H1 (cell line): ENCODE measurements at regions of chr18 and their contacts with region 1.

Region 1: DNA sequence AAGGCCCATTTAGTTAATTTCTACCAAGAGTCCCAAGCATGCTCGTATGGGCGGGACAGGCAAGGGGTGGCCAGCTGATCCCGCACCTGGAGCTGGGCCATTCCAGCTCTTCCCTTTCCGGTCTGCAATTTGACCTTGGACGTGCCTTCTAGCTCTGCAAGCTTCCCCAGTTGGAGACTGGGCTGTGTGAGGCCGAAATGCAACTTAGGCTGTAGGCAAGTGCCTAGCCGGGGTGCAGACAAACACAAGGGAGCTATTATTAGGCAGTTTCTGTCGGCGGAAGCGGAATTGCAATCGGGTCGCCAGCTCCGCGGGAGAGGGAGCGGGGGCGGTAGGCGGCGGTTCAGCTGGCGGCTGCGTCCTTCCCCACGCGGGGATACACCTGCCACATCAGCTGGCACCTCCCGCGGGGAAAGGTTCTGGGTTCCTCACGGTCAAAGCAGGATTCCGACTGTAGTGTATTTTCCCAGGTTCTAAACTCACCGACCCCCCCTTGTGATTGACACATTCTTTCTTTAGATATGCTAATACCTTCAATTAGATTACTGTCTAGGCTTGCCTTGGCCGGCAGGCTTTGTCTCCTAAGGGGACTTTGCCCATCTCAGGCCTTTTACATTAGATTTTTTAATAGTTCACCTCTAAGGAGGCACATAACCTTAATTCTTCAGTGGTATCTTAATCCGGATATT is 17.1 kb upstream of the ZNF532 start:
- DNase-seq: peak; percentile 88 to 94
- H3K4me3 ChIP-seq: peak overlapping the region in 1 of 4 experiments; percentile 28; a peak in 4 of 8 replicates
- H3K27ac ChIP-seq: peak overlapping the region; percentile 75
- H3K4me1 ChIP-seq: peaks cover 14 to 35% (median 34%) of the 10 kb centered on the region in 4 experiments; a peak in 6 of 7 replicates
- H3K27me3 ChIP-seq: no peaks in the 10 kb centered on the region
- CTCF ChIP-seq: no peak
- EP300 ChIP-seq: peak in 1 of 2 experiments; percentile 83; a peak in 1 of 3 replicates
- POLR2A ChIP-seq: peak in 1 of 2 experiments; percentile 57; a peak in 1 of 3 replicates
- RAD21 ChIP-seq: peak in 1 of 2 experiments; percentile 5; a peak in 1 of 4 replicates

Region 2: DNA sequence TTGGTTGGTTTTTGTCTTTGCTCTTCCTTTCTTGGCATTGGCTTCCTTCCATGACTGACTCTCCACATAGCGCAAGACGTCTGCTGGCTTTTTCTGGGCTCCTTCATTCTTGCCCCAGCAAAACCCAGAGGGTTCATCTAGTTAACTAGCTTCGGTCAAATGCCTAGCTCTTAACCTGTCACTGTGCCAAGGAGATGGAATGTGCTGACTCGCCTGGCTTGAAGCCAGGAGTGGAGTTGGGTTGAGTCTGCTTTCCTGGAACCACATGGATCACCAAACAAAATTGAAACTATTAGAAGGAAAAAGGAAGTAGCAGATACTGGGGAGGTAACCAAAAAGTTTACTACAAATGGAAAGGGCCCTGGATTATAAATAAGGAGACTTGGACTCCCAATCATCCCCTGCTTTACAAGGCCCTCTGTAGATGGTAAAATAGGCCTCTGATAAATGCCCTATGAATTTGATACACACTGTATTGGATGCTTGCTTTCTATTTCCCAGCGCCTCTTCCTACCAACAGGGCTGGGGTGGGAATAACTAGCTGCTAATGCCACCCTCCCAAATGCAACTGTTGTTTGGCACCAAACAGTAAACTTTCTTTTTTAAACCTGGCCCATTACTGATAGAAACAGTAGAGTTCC is 165.0 kb before region 1 on chr18:
- CTCF ChIA-PET with region 1: no interaction called
- POLR2A ChIA-PET with region 1: no interaction called
- DNase-seq: no peak
- H3K4me3 ChIP-seq: no peak overlapping the region
- H3K27ac ChIP-seq: no peak overlapping the region
- H3K4me1 ChIP-seq: no peaks in the 10 kb centered on the region; a peak in 1 of 7 replicates
- H3K27me3 ChIP-seq: no peaks in the 10 kb centered on the region
- CTCF ChIP-seq: no peak
- EP300 ChIP-seq: no peak
- POLR2A ChIP-seq: no peak
- RAD21 ChIP-seq: no peak

Region 3: GRCh38 chr18:58806826-58807714 is 40.5 kb before region 1 on chr18:
- CTCF ChIA-PET with region 1: interaction called, 3 read pairs
- POLR2A ChIA-PET with region 1: interaction called, 14 read pairs
- DNase-seq: no peak
- H3K4me3 ChIP-seq: no peak overlapping the region
- H3K27ac ChIP-seq: 0 out of 2 replicates have a peak overlapping the region, but pooled peaks have one; percentile 9
- H3K4me1 ChIP-seq: peaks cover 2 to 12% (median 8%) of the 10 kb centered on the region in 4 experiments; a peak in 6 of 7 replicates
- H3K27me3 ChIP-seq: no peaks in the 10 kb centered on the region
- CTCF ChIP-seq: no peak
- EP300 ChIP-seq: no peak
- POLR2A ChIP-seq: no peak
- RAD21 ChIP-seq: no peak

Region 4: GRCh38 chr18:58870130-58870529 is 22.6 kb after region 1 on chr18:
- CTCF ChIA-PET with region 1: interaction called, 16 read pairs
- POLR2A ChIA-PET with region 1: interaction called, 289 read pairs
- DNase-seq: no peak
- H3K4me3 ChIP-seq: no peak overlapping the region
- H3K27ac ChIP-seq: peak overlapping the region; percentile 43; the same call in 1 of the 2 replicates
- H3K4me1 ChIP-seq: peaks cover 18 to 37% (median 30%) of the 10 kb centered on the region in 4 experiments
- H3K27me3 ChIP-seq: no peaks in the 10 kb centered on the region
- CTCF ChIP-seq: no peak
- EP300 ChIP-seq: no peak
- POLR2A ChIP-seq: no peak
- RAD21 ChIP-seq: no peak

Region 5: GRCh38 chr18:58882044-58882443 is 34.5 kb after region 1 on chr18:
- CTCF ChIA-PET with region 1: interaction called, 3 read pairs
- POLR2A ChIA-PET with region 1: interaction called, 10 read pairs
- DNase-seq: no peak
- H3K4me3 ChIP-seq: no peak overlapping the region
- H3K27ac ChIP-seq: no peak overlapping the region
- H3K4me1 ChIP-seq: peaks cover 0 to 8% (median 1%) of the 10 kb centered on the region in 4 experiments; a peak in 2 of 7 replicates
- H3K27me3 ChIP-seq: no peaks in the 10 kb centered on the region
- CTCF ChIP-seq: no peak
- EP300 ChIP-seq: no peak
- POLR2A ChIP-seq: no peak
- RAD21 ChIP-seq: no peak